Breast epithelium (tissue), 4 donors: ENCODE measurements at regions of chr16 and their contacts with region 1.

Region 1: GRCh38 chr16:68128577-68129305 is 43.6 kb downstream of the NFATC3 start:
- DNase-seq: no peak
- H3K4me3 ChIP-seq: no peak overlapping the region
- H3K27ac ChIP-seq: no peak overlapping the region
- H3K4me1 ChIP-seq: no peaks in the 10 kb centered on the region
- H3K27me3 ChIP-seq: no peaks in the 10 kb centered on the region
- CTCF ChIP-seq: no peak
- POLR2A ChIP-seq: no peak

Region 2: DNA sequence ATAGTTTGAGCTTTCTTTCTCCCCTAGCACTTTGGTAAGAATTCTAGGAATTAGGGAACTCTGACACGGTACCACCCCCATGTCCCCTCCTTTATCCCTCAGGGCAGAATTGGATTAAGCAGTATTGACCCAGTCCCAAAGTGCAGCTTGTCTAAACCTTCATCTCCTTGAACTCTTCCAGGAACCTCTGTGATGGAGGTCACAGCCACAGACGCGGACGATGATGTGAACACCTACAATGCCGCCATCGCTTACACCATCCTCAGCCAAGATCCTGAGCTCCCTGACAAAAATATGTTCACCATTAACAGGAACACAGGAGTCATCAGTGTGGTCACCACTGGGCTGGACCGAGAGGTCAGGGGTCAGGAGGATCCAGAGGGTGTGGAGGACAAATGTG is 682.8 kb after region 1 on chr16:
- intact Hi-C with region 1: loop called (anchors 10 kb)
- DNase-seq: no peak
- H3K4me3 ChIP-seq: no peak overlapping the region
- H3K27ac ChIP-seq: no peak overlapping the region
- H3K4me1 ChIP-seq: no peaks in the 10 kb centered on the region
- H3K27me3 ChIP-seq: no peaks in the 10 kb centered on the region
- CTCF ChIP-seq: no peak
- POLR2A ChIP-seq: no peak